Transverse colon (tissue), 4 donors: ENCODE measurements at regions of chr1 and their contacts with region 1.

Region 1: DNA sequence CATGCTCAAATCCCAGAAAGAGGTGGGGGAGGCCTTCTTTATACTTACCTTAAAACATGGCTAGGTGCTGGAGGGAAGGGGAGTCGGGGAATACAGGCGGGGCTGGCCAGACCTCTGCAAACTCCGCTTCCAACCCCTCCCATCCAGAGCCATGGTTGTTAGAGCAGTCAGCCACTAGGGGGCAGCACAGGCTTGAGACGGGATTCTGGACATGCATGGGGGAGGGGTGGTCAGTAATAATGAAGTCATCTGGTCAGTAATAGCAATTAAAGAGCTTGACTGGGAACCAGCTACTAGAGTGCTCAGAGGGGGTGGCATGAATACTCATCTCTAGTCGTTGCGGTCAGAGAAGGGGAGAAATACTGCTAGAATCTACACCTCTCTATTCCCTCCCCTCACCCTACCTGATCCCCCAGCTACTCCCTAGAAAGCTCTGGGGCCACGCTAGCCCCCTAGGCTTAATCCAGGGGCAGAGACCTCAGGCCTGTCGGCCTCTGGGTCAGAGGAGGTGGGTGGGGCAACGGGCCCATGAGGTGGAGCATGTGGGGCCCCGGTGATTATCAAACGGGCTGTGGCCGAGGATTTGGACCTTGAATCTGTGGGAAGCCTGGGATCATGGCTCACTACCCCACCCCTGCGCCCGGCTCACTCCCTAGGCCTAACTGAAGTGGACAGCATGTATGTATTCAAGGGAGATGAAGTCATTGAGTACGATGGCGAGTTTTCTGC is 2.9 kb downstream of the CASQ1 start:
- DNase-seq: peak; percentile 88
- H3K4me3 ChIP-seq: no peak overlapping the region
- H3K27ac ChIP-seq: no peak overlapping the region
- H3K4me1 ChIP-seq: peaks cover 5 to 16% (median 10%) of the 10 kb centered on the region in 4 donors
- H3K27me3 ChIP-seq: no peaks in the 10 kb centered on the region
- CTCF ChIP-seq: peak; percentile 95 to 98 (median 97)
- EP300 ChIP-seq: no peak
- POLR2A ChIP-seq: no peak

Region 2: DNA sequence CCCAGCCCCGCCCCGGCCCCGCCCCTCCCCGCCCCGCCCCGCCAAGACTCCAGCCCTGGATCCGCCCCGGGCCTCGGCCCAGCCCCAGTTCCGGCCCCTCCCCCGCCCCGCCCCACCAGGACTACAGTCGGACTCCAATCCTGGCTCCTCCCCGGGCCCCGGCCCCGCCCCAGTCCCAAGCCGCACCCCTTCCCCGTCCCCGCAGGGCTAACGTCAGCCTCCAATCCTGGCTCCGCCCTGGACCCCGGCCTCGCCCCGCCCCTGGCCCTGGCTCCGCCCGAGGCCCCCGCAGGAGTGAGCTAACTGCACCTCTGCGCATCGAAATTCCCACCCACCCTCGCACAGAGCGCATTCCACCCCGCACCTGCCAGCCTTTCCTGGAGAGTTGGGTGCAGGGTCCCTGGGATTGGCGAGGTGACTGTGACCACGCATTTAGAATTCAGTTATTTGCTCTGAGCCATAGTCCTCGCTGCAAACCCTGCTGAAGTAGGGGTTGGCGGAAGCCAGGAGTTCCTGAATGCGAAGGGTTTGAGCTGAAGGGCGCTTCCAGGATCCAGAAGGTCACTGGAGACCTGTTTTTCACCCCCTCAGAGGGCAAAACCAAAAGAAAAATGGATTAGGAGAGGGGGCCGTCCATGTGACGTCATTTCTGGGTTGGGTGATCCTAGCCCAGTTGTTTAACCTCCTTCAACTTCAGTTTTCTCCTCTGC is 94.2 kb before region 1 on chr1:
- in situ Hi-C with region 1: no loop called
- intact Hi-C with region 1: loop called (anchors 10 kb)
- DNase-seq: peak; percentile 99
- H3K4me3 ChIP-seq: peak overlapping the region; percentile 29 to 88 (median 56)
- H3K27ac ChIP-seq: peak overlapping the region; percentile 90 to 97 (median 95)
- H3K4me1 ChIP-seq: peaks cover 33 to 65% (median 48%) of the 10 kb centered on the region in 4 donors
- H3K27me3 ChIP-seq: no peaks in the 10 kb centered on the region
- CTCF ChIP-seq: no peak
- EP300 ChIP-seq: no peak
- POLR2A ChIP-seq: peak; percentile 64

Region 3: GRCh38 chr1:160251687-160252526 is 58.7 kb after region 1 on chr1:
- in situ Hi-C with region 1: loop called in 1 of 4 experiments (anchors 10 kb)
- intact Hi-C with region 1: loop called (anchors 5 kb)
- DNase-seq: peak; percentile 67
- H3K4me3 ChIP-seq: no peak overlapping the region
- H3K27ac ChIP-seq: peak overlapping the region in 2 of 4 donors; percentile 23 to 43
- H3K4me1 ChIP-seq: peaks cover 5 to 31% (median 7%) of the 10 kb centered on the region in 4 donors
- H3K27me3 ChIP-seq: no peaks in the 10 kb centered on the region
- CTCF ChIP-seq: peak; percentile 60 to 72 (median 63)
- EP300 ChIP-seq: no peak
- POLR2A ChIP-seq: no peak

Region 4: GRCh38 chr1:160284782-160285344 is 91.6 kb after region 1 on chr1 and contains the start of gene PEX19:
- in situ Hi-C with region 1: loop called in 3 of 4 experiments (anchors 5 to 25 kb)
- intact Hi-C with region 1: loop called (anchors 10 kb)
- DNase-seq: peak; percentile 95
- H3K4me3 ChIP-seq: peak within 1 kb of the TSS; percentile 86 to 100 (median 93)
- H3K27ac ChIP-seq: peak within 1 kb of the TSS; percentile 88 to 96 (median 91)
- H3K4me1 ChIP-seq: peaks cover 11 to 23% (median 14%) of the 10 kb centered on the region in 4 donors
- H3K27me3 ChIP-seq: no peaks in the 10 kb centered on the region
- CTCF ChIP-seq: no peak
- EP300 ChIP-seq: no peak
- POLR2A ChIP-seq: peak; percentile 80
- total RNA-seq, gene PEX19: 22.1 to 50.8 (median 32.8) TPM

Region 5: DNA sequence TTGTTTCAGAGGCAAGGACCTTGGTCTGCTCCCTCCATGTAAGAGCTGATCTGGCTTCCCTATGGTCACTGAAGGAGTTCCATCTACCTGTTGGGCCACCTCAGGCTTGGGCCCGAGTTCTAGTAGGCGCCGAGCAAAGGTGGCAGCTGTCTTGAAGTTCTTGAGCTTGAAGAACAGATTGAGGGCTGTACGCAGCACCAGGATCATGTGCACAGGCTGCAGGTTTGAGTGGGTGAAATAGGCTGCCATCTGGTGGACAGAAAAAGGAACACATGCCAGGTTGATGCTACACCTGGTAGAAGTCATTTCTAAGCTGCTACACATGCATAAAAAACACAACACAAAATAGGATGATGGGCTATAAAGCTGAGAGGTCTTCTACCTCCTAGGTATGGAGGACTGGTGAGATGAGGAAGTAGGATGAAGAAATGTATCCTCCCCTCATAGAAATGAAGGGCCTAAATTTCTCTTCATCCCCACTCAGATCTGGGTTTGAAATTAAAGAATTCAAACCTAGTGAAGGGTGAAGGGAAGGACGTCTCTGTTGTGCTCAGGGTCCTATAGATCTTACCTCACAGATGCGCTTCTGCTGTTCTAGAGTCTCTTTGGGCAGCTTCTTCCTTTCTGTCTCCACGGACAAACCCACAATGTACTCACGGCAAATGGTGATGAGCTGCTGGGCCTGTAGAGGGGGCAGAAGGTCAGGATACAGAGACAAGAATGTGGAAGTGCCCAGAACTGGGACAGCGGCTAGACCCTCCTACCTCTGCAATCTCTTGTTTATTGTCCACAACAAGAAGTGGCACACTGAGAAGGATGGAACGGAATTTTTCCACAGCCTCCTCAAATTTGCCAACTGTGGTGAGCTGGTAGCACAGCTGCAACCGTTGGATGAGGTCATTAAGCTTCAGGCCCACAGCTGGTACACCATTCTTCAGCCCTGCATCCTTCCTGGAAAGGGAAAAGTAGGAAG is 98.3 kb after region 1 on chr1:
- in situ Hi-C with region 1: loop called in 3 of 4 experiments (anchors 5 to 25 kb)
- intact Hi-C with region 1: loop called (anchors 10 kb)
- DNase-seq: peak; percentile 69
- H3K4me3 ChIP-seq: no peak overlapping the region
- H3K27ac ChIP-seq: no peak overlapping the region
- H3K4me1 ChIP-seq: no peaks in the 10 kb centered on the region
- H3K27me3 ChIP-seq: no peaks in the 10 kb centered on the region
- CTCF ChIP-seq: peak; percentile 74 to 85 (median 84)
- EP300 ChIP-seq: no peak
- POLR2A ChIP-seq: no peak